Dorsolateral prefrontal cortex (tissue), 120 donors: ENCODE measurements at regions of chr18 and their contacts with region 1.

Region 1: GRCh38 chr18:70082430-70082829 is 123.1 kb downstream of the RTTN start:
- DNase-seq: no peak
- H3K4me3 ChIP-seq: no peak overlapping the region
- H3K27ac ChIP-seq: peak overlapping the region in 37 of 59 donors; percentile 1 to 73 (median 33)
- H3K27me3 ChIP-seq: no peaks in the 10 kb centered on the region
- CTCF ChIP-seq: no peak

Region 2: DNA sequence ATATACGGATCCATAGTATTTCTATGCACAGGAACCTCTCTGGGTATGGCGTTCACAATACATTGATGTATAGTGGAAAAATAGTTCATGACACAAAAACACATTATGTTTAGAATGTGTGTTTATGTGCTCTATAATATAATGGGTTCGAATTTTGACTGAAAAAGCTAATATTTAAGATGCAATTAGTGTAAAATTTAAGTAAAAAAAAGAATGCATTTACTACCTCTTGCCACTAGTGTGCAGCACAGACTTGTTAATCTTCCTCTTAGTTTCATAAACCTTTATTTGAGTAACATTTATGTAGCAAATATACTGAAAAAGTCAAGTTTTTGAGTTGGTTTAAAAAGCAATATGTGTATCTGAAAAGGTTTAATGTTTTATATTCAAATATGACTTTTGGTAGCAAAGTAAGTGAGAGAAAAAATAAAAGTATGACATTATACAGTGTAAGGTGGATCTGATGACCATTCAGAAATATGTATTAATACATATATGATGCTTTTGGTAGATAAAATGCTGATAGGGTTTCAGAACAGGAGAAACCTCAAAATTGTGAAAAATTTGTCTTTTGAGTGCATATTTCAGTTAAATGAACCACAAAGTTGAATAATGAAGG is 1235.1 kb before region 1 on chr18:
- intact Hi-C with region 1: loop called (anchors 5 to 10 kb)
- DNase-seq: no peak
- H3K4me3 ChIP-seq: peak overlapping the region in 25 of 59 donors; percentile 3 to 51 (median 30)
- H3K27ac ChIP-seq: no peak overlapping the region
- H3K27me3 ChIP-seq: no peaks in the 10 kb centered on the region
- CTCF ChIP-seq: peak; percentile 50 to 90 (median 70)

Region 3: DNA sequence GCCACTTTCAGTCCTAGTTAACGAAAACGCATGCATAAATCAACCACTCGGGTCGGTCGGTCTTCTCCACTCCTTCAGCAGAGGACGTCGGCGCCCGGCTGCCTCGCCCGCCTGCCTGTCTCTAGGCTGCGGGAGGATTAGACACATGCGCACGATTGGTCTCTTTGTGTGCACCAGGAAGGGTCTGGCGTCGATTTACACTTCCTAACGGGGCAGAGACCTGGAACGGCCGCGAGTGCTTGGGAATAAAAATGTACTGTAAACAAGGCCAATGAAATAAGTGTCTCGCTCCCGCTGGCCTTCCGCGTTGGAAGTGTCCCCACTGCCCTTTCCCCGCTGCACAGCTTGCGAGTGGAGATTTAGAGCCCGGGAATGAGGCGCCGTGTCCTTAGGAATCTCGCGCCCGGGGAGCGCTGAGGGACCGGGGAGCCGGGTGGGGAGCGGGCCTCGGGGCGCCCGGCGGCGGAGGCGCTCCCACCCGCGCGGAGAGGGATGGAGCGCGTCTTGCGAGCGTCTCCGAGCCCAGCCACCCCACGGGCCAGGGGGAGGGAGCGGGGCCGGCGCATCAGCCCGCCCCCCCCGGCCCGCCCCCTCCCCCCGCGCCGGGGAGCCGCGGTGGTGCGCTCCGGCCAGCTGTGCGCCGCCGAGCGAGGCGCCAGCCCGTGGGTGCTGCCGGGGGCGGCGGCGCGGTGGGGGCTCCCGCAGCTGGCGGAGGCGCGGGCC is 682.0 kb before region 1 on chr18 and contains the start of gene DOK6:
- intact Hi-C with region 1: loop called in 1 of 2 experiments (anchors 10 kb)
- DNase-seq: peak; percentile 30 to 79 (median 64)
- H3K4me3 ChIP-seq: peak within 1 kb of the TSS; percentile 52 to 82 (median 69)
- H3K27ac ChIP-seq: peak within 1 kb of the TSS in 54 of 59 donors; percentile 34 to 89 (median 77)
- H3K27me3 ChIP-seq: peaks cover 0 to 11% (median 0%) of the 10 kb centered on the region in 45 donors
- CTCF ChIP-seq: no peak
- total RNA-seq, gene DOK6: 12.6 to 78.6 (median 41.6) TPM

Region 4: DNA sequence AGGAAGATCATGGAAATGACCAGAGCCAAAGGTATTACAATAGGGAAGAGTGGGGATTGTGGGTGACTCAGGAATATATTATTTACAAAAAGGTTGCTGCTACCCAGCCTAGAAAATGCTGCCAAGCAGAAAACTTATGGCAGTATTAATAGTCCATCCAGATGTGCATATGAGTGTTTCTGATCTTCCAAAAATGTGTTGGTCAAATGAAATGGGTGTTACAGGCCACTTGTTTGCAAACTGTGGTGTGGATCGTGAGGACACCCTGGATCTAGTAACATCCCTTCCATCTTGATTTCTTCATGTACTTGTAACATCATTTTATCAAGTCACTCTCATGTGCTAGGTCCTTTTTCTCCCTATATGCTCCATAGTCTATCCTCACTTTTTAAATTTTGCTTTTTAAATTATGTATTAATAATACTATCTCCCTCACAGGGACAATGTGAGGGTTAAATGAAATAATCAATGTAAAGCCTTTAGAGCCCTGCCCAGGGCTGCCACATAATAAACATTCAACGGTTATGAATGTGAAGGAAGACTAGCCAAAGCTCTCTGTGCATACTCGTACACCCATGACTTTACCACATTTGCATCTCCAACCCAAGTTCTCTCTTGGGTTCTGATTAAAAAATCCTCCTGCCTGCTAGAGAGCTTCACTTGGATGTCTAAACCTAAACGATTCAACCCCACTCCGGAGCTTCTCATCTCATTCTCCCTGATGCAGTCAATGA is 153.2 kb before region 1 on chr18:
- intact Hi-C with region 1: no loop called
- DNase-seq: no peak
- H3K4me3 ChIP-seq: no peak overlapping the region
- H3K27ac ChIP-seq: no peak overlapping the region
- H3K27me3 ChIP-seq: no peaks in the 10 kb centered on the region
- CTCF ChIP-seq: no peak